ENCODE measurements at regions of chr5 and their contacts with region 1.

Region 1: DNA sequence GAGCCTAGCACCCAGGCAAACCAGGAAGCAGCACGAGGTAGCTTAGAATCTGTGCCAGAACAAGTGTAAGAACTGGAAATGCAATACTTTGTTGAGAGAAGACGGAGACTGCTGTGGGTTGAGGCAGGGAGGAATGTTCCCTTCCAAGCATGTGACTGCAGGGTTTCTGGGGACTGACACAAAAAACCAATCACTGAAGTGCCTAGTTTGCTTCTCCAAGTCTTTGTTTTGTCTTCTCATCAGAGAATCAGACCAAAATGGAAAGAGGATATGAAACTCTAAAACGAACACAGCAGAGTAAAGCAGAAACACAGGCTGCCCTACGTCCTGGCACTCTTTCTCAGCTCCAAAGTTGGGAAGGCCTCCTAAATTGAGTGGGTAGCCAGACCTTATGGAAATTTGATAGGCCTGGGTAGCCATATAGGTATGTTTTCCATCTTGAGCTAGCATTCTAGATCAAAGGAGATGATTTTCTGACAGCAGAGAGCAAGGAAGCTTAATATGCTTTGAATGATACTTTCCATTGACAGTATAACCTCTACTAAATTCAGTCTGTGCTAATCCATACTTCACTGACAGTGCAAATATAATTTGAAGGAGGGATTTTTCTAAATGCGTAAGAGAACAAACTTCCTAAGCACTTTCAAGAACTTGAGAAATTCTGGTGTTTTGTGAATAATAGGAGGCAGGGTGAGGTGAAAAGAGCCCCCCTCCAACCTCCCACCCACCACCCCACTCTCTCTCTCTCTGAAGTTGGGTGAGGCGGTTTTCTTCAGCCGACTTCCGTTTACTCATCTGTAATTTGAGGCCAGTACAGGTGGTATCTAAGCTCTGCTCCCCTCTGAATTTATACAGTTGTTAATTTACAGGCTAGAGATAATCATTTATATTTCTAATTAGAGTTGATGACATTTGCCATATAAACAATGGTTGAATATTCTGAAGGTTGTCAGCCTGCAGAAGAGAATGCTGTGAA is 5.5 kb downstream of the ADRB2 start:
- DNase-seq: no peak
- H3K4me3 Mint-ChIP-seq: no peak overlapping the region
- H3K27ac Mint-ChIP-seq: no peak overlapping the region
- H3K4me1 Mint-ChIP-seq: peaks cover 5% of the 10 kb centered on the region
- H3K27me3 Mint-ChIP-seq: peaks cover 45% of the 10 kb centered on the region

Region 2: DNA sequence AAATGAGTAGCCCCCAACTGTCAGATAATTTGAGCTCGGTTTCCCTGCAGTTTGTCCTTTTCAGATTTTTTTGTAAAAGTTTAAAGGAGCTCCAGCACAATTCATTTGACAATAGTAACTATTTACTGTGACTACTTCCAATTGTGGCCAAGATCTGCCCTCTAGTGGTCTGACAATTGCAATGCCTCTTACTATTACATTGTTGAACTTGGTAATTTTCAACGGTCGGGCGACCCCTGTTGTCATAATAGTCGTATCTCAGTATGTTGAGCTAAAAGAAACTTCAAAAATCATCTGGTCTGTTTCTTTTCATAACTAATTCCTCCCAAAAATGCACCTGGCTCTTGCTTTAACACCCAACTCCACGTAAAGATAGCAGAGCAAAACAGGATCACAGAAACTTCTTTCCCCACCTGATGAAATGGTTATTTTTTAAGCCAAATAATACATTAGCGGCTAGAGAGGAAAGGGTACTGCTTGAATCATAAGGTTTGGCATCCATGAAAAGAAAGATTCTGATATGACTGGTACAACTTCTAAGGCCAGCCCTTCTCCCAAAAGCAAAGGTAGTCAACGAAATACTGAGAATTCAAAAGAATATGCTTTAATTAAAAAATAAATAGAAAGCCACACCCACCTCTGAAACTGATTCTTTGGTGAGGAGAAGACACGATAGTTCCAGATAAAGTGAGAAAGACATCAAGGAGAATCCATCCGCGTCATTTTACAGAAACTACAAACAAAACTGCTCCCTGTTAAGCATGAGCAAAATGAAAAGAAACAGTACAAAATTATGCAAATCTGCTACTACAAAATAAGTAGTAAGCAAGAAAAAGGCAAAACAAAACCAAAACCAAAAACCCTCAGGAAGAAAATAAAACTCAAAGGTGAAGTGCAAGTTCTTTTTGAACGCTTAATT is 100.7 kb before region 1 on chr5:
- intact Hi-C with region 1: no loop called
- DNase-seq: peak; percentile 89
- H3K4me3 Mint-ChIP-seq: peak overlapping the region; percentile 9
- H3K27ac Mint-ChIP-seq: peak overlapping the region; percentile 3
- H3K4me1 Mint-ChIP-seq: peaks cover 7% of the 10 kb centered on the region
- H3K27me3 Mint-ChIP-seq: peaks cover 17% of the 10 kb centered on the region

Region 3: GRCh38 chr5:148776780-148777179 is 55.1 kb before region 1 on chr5:
- intact Hi-C with region 1: no loop called
- DNase-seq: no peak
- H3K4me3 Mint-ChIP-seq: no peak overlapping the region
- H3K27ac Mint-ChIP-seq: no peak overlapping the region
- H3K4me1 Mint-ChIP-seq: no peaks in the 10 kb centered on the region
- H3K27me3 Mint-ChIP-seq: peaks cover 31% of the 10 kb centered on the region

Region 4: DNA sequence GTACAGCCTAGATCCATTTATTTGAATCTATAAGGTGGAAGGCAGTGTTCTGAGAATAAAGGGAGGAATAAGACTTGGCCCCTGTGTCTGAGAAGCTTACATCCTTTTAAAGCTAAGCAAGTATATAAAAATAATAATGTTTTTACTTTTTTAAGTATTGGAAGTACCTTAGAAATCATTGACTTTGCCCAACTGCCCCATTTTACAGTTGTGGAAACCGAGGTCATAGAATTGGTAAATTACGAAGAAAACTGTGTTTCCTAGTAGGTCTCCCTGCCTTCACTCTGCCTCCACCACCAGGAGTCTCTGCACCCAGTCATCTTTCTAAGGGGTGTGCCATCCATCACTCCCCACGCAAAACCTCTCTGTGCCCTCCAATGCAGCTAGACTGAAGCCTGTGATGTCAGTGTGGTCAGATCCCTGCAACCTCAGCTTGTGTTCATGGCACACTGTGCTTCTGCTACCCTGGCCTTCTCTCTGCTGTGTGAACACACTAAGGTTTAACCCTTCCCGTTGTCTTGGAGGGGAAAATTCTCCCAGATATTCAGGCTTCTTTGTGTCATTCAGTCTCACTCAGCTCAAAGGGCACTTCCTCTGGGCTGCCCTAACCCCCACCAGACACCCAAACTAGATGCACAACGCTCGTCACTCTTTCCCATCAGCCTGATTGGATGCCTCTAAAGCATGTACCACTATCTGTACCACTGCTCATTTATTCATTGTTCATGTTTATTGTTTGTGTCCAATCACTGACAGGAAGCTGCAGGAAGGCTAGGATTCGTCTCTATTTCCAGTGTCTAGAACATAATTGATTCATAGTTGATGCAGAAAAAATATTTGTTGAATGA is 12.8 kb after region 1 on chr5:
- intact Hi-C with region 1: loop called (anchors 2 kb)
- DNase-seq: no peak
- H3K4me3 Mint-ChIP-seq: no peak overlapping the region
- H3K27ac Mint-ChIP-seq: no peak overlapping the region
- H3K4me1 Mint-ChIP-seq: peaks cover 24% of the 10 kb centered on the region
- H3K27me3 Mint-ChIP-seq: peaks cover 9% of the 10 kb centered on the region

Region 5: DNA sequence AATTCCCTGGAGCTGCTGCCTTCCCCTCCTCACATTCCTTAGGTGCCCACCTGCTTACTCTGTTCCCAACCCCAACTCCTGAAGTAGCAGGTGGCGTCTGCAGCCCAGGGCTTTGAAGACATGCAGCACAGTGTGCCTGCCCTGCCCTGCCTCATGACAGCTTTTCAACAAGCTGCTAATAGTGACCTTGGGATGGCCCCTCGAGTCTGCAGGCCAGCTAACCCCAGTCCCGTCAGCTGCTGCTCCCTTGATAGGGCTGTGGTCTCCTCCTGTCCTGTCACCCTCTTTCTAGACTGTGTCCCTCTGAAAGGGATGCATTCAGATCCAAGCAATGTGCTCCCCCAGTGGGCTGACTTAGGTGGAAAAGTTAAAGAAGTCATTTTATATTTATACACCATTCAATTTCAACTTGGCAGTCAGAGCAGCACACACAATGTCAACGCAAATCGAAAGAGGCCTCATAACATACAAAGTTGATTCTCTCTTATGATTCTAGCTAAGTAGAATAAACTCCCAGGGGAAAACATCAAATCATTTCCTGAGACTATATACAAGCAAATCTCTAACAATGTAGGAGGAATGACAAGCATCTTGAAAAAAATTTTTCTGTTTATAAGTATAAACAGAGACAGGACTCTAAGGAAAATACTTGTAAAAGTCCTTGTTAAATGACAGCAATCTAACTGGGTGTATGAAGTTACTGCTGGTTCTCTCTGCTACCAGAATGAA is 32.4 kb after region 1 on chr5:
- intact Hi-C with region 1: no loop called
- DNase-seq: no peak
- H3K4me3 Mint-ChIP-seq: no peak overlapping the region
- H3K27ac Mint-ChIP-seq: no peak overlapping the region
- H3K4me1 Mint-ChIP-seq: peaks cover 1% of the 10 kb centered on the region
- H3K27me3 Mint-ChIP-seq: peaks cover 4% of the 10 kb centered on the region